Endothelial cell of umbilical vein (primary cell): ENCODE measurements at regions of chr3 and their contacts with region 1.

Region 1: GRCh38 chr3:39126532-39127071 is 19.1 kb downstream of the TTC21A start:
- DNase-seq: peak; percentile 73
- H3K4me3 ChIP-seq: no peak overlapping the region
- H3K27ac ChIP-seq: no peak overlapping the region
- H3K4me1 ChIP-seq: peaks cover 10% of the 10 kb centered on the region
- H3K27me3 ChIP-seq: no peaks in the 10 kb centered on the region
- CTCF ChIP-seq: peak; percentile 53 to 76
- POLR2A ChIP-seq: no peak

Region 2: DNA sequence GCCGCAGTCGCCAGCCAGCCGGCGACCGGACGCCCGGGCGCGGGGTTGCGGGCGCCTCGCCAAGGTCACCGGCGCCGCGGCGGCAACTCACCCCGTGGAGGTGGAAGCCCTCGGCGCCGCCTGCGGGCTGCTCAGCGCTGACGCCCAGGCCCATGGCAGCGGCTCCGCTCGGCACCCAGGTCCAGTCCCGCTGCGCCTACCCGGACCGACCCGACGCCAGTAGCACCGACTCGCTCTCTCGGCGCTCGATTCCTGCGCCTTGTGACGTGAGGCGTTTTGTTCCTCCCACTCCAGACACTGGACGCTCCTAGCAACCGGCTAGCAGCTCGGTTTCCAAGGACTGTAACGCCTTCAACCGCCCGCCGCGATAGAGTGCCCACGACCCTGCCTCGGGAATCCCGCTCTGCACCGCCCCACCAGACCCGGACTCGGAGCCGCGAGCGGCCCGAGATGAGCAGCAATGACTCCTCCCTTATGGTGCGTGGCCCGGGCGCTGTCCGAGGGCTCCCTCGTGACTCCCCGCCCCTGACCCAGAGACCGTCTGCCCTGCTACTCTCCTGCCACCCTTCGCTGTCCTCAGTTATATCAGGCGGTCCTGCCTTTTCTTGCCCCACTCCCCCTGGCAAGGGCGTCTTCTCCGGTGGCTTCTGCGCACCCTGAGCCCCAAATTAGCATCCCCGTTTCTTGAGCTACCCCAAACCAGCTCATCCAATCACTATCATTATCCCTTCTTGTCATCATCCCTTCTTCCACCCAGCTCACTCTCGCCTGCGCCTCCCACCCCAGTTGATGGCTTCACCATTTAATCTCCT is 19.0 kb before region 1 on chr3 and contains the starts of genes GORASP1 and TTC21A:
- CTCF ChIA-PET with region 1: interaction called, 24 read pairs
- POLR2A ChIA-PET with region 1: no interaction called
- dilution Hi-C with region 1: no loop called
- intact Hi-C with region 1: loop called (anchors 1 kb)
- DNase-seq: peak; percentile 86
- H3K4me3 ChIP-seq: peak within 1 kb of the TSS; percentile 69 to 84 (median 78)
- H3K27ac ChIP-seq: peak within 1 kb of the TSS; percentile 75
- H3K4me1 ChIP-seq: peaks cover 18% of the 10 kb centered on the region
- H3K27me3 ChIP-seq: no peaks in the 10 kb centered on the region
- CTCF ChIP-seq: no peak
- POLR2A ChIP-seq: peak; percentile 67
- total RNA-seq, gene GORASP1: 68.0 and 74.7 TPM in 2 replicates
- total RNA-seq, gene TTC21A: 6.3 and 7.8 TPM in 2 replicates

Region 3: GRCh38 chr3:39146984-39147591 is 20.5 kb after region 1 on chr3:
- CTCF ChIA-PET with region 1: no interaction called
- POLR2A ChIA-PET with region 1: interaction called, 3 read pairs
- dilution Hi-C with region 1: no loop called
- intact Hi-C with region 1: loop called (anchors 2 kb)
- DNase-seq: peak; percentile 95
- H3K4me3 ChIP-seq: peak overlapping the region in 1 of 3 experiments; percentile 33
- H3K27ac ChIP-seq: peak overlapping the region; percentile 97
- H3K4me1 ChIP-seq: peaks cover 65% of the 10 kb centered on the region
- H3K27me3 ChIP-seq: no peaks in the 10 kb centered on the region
- CTCF ChIP-seq: no peak
- POLR2A ChIP-seq: peak; percentile 40

Region 4: DNA sequence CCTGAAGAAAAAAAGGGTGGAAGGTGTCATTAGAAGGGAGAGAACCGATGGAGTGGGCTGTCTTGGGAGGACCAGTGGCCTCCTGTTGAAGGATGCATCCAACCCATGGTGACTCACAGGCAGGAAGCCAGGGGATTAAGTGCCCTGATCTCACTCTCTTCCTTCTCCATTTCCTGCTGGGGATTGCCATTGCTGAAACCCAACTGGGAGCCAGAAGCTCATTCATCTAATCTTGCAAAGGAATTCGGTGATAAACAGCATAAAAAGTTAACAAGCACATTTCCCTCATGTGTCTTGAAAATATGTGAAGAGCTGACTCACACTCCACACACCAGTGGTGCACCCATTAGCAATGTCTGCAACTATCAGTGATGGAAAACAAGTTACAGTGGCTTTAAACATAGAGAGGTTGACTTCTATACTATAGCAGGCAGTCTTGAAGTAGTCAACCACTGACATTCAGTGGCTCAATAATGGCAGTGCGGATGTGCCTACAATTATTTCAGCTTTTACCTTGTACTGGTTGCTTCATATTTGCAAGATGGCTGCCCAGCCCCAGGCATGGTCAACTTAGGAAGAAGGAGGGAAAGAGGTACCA is 39.6 kb after region 1 on chr3:
- CTCF ChIA-PET with region 1: interaction called, 36 read pairs
- POLR2A ChIA-PET with region 1: no interaction called
- dilution Hi-C with region 1: no loop called
- intact Hi-C with region 1: no loop called
- DNase-seq: peak; percentile 94
- H3K4me3 ChIP-seq: no peak overlapping the region
- H3K27ac ChIP-seq: peak overlapping the region; percentile 79
- H3K4me1 ChIP-seq: peaks cover 29% of the 10 kb centered on the region
- H3K27me3 ChIP-seq: no peaks in the 10 kb centered on the region
- CTCF ChIP-seq: no peak
- POLR2A ChIP-seq: peak; percentile 37

Region 5: DNA sequence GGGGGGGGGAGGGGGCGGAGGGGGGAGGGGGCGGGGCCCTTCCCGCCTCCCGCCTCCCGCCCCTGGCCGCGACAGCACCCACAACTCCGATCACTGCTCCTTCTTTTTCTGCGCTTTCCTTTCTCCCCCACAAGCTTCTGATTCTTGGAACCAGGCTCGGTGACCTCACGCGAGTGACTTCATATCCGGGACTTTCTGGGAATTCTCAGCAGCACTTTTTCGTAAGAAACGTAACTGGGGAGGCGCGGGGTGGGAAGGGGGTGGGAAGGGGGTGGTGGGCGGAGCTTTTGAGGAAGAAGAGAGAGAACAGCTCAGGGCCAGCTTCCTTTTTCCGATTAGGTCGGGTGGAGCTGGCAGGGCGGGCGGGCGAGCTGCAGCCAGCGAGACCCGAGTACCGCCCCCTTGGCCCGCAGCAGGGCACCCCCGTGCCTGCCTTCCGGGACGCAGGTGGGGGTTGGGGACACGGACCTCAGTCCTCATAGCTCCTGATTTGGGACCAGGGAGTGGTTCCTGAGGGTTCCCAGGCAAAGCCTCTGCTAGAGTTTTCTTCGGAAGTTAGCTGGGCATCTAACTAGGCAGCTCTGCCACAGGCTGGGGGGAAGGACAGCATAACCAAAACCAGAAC is 51.2 kb after region 1 on chr3:
- CTCF ChIA-PET with region 1: interaction called, 41 read pairs
- POLR2A ChIA-PET with region 1: interaction called, 3 read pairs
- dilution Hi-C with region 1: no loop called
- intact Hi-C with region 1: loop called (anchors 1 kb)
- DNase-seq: peak; percentile 95
- H3K4me3 ChIP-seq: peak overlapping the region in 2 of 3 experiments; percentile 41 to 55
- H3K27ac ChIP-seq: peak overlapping the region; percentile 96
- H3K4me1 ChIP-seq: peaks cover 25% of the 10 kb centered on the region
- H3K27me3 ChIP-seq: no peaks in the 10 kb centered on the region
- CTCF ChIP-seq: no peak
- POLR2A ChIP-seq: peak; percentile 37

Region 6: DNA sequence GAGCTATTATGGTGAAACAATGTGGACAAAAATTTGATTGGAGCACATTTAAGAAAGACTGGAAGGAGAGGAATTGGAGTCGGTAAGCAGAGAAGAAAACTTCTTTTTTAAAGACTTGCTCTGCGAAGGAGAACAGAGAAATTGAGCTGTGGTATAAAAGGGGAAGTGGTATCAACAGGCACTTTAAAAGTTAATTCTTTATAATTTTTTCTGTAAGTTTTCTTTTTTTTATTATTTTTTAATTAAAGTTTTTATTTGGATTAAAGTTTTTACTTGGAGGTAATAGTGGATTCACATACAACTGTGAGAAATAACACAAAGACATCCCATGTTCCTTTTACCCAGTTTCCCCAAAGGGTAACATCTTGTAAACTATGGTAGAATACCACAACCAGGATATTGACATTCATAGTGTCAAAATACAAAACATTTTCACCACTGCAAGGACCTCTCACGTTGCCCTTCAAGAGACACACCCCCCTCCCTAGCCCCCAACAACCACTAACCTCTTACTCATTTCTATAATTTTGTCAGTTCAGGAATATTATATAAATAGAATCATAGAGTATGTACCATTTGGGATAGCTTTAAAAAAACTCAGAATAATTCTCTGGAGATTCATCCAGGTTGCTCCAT is 99.6 kb after region 1 on chr3:
- CTCF ChIA-PET with region 1: interaction called, 20 read pairs
- POLR2A ChIA-PET with region 1: no interaction called
- dilution Hi-C with region 1: no loop called
- intact Hi-C with region 1: no loop called
- DNase-seq: no peak
- H3K4me3 ChIP-seq: no peak overlapping the region
- H3K27ac ChIP-seq: no peak overlapping the region
- H3K4me1 ChIP-seq: no peaks in the 10 kb centered on the region
- H3K27me3 ChIP-seq: peaks cover 10 to 15% of the 10 kb centered on the region in 2 experiments
- CTCF ChIP-seq: no peak
- POLR2A ChIP-seq: no peak

Region 7: DNA sequence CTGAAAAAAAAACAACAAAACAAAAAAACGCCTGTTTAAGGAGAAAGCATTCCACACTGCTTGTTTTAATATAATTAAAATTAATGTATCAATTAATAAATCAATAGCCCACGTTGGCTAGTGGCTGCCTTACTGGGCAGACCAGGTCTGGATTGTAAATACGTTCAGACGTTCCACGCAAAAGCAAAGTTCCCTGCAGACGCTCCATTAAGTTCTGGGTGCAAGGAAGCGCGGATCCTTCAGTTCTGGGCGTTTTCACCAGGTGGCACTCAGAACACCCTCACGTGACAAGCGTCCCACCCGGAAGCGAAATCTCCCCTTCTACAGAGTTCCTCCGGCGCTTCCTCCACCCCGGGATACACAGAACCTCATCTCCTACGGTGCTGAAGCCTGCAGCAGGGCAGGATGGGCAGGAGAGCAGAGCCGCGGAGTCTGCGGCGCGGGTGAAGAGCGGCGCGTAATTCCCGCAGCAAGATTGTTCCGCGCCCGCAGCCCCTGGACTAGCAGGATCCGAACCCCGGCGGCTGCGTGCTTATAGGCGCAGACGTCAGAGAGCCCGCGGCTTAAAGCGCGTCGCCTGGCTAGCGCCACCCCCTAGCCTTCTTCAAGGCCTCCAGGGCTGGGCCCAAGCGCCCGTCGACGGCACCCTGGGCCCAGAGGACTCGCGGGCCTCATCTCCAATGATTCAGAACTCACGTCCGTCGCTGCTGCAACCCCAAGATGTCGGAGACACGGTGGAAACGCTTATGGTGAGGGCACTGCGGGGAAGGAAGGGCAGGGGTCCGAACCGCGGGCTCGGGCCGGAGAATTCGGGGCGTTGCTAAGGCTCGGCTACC is 256.7 kb after region 1 on chr3 and contains the start of gene SLC25A38:
- CTCF ChIA-PET with region 1: interaction called, 6 read pairs
- POLR2A ChIA-PET with region 1: no interaction called
- dilution Hi-C with region 1: no loop called
- intact Hi-C with region 1: loop called (anchors 5 kb)
- DNase-seq: peak; percentile 86
- H3K4me3 ChIP-seq: peak within 1 kb of the TSS; percentile 58 to 79 (median 70)
- H3K27ac ChIP-seq: peak within 1 kb of the TSS; percentile 54
- H3K4me1 ChIP-seq: peaks cover 8% of the 10 kb centered on the region
- H3K27me3 ChIP-seq: no peaks in the 10 kb centered on the region
- CTCF ChIP-seq: peak in 1 of 2 donors; percentile 24
- POLR2A ChIP-seq: peak; percentile 71
- total RNA-seq, gene SLC25A38: 16.0 and 20.0 TPM in 2 replicates